GM12878 (cell line): ENCODE measurements at regions of chr10 and their contacts with region 1.

Region 1: DNA sequence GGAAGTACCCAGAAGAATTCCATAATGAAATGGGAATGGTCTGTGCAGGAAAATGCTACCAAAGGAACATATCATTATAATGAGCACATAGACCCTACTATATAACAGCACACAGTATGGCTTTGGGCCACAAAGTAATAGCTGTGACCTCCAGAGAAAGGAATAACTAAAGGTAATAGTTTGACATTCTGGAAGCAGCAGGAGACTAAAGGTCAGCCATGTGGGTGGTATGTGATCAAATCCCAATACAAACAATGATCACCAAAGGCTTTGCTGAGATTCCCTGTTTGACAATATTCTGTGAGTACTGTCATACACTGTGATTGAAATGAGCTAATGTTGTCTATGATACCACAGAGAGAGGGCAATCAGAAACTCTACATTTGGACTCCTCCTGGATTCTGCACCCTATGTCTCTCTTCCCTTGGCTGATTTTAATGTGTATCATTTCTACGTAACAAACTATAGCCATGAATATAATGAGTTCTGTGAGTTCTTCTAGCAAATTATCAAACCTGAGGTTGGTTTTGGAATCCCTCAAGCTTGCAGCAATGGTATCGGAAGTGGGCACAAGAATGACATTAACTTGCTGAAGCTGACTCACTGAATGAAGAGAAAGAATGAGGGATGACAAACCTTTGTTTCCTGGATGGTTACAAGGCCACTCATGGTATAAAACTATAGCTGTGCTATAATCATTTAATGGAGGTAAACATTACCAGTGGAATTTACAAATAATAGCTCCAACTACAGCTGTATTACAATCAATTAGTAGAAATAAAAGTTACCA is 99.6 kb downstream of the JMJD1C start:
- DNase-seq: no peak
- ATAC-seq: peak; percentile 64
- H3K4me3 ChIP-seq: no peak overlapping the region
- H3K27ac ChIP-seq: no peak overlapping the region
- H3K4me1 ChIP-seq: no peaks in the 10 kb centered on the region
- H3K27me3 ChIP-seq: no peaks in the 10 kb centered on the region
- CTCF ChIP-seq: no peak
- EP300 ChIP-seq: no peak
- POLR2A ChIP-seq: no peak
- RAD21 ChIP-seq: no peak

Region 2: GRCh38 chr10:63355682-63356081 is 10.5 kb before region 1 on chr10:
- CTCF ChIA-PET with region 1: interaction called, 3 read pairs
- POLR2A ChIA-PET with region 1: no interaction called
- RAD21 ChIA-PET with region 1: interaction called, 5 read pairs
- SMC1A ChIA-PET with region 1: interaction called, 16 read pairs
- in situ Hi-C with region 1: no loop called
- intact Hi-C with region 1: no loop called
- DNase-seq: no peak
- ATAC-seq: peak; percentile 64
- H3K4me3 ChIP-seq: no peak overlapping the region
- H3K27ac ChIP-seq: peak overlapping the region; percentile 51
- H3K4me1 ChIP-seq: peaks cover 13% of the 10 kb centered on the region
- H3K27me3 ChIP-seq: no peaks in the 10 kb centered on the region
- CTCF ChIP-seq: no peak
- EP300 ChIP-seq: no peak
- POLR2A ChIP-seq: no peak
- RAD21 ChIP-seq: no peak

Region 3: DNA sequence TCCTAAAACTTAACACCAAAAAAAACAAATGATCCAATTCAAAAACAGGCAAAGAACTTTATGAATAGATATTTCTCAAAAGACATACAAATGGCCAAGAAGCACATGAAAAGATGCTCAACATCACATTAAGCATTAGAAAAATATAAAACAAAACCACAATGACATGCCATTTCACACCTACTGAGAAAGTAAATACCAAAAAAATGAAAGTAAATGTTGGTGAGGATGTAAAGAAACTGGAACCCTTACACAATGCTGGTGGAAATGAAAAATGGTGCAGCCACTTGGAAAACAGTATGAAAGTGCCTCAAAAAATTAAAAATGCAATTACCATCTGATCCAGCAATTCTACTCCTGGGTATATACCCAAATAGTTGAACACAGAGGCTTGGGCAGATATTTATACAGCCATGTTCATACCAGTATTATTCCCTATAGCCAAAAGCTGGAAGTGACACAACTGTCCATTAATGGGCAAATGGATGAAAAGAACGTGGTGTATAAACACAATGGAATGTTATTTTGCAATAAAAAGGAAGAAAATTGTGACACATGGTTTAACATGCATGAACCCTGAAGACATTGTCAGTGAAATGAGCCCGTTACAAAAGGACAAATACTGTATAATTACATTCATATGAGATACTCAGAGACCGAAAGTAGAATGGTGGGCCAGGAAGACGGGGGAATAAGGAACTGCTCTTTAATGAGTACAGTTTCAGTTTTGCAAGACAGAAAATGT is 10.6 kb after region 1 on chr10:
- CTCF ChIA-PET with region 1: interaction called, 3 read pairs
- POLR2A ChIA-PET with region 1: no interaction called
- RAD21 ChIA-PET with region 1: interaction called, 3 read pairs
- SMC1A ChIA-PET with region 1: interaction called, 11 read pairs
- in situ Hi-C with region 1: no loop called
- intact Hi-C with region 1: no loop called
- DNase-seq: peak; percentile 64
- ATAC-seq: peak; percentile 98
- H3K4me3 ChIP-seq: peak overlapping the region; percentile 8
- H3K27ac ChIP-seq: peak overlapping the region; percentile 47
- H3K4me1 ChIP-seq: peaks cover 7% of the 10 kb centered on the region
- H3K27me3 ChIP-seq: no peaks in the 10 kb centered on the region
- CTCF ChIP-seq: no peak
- EP300 ChIP-seq: 0 out of 4 replicates have a peak, but pooled peaks of 1 of the 2 experiments have one; percentile 30
- POLR2A ChIP-seq: no peak
- RAD21 ChIP-seq: no peak

Region 4: DNA sequence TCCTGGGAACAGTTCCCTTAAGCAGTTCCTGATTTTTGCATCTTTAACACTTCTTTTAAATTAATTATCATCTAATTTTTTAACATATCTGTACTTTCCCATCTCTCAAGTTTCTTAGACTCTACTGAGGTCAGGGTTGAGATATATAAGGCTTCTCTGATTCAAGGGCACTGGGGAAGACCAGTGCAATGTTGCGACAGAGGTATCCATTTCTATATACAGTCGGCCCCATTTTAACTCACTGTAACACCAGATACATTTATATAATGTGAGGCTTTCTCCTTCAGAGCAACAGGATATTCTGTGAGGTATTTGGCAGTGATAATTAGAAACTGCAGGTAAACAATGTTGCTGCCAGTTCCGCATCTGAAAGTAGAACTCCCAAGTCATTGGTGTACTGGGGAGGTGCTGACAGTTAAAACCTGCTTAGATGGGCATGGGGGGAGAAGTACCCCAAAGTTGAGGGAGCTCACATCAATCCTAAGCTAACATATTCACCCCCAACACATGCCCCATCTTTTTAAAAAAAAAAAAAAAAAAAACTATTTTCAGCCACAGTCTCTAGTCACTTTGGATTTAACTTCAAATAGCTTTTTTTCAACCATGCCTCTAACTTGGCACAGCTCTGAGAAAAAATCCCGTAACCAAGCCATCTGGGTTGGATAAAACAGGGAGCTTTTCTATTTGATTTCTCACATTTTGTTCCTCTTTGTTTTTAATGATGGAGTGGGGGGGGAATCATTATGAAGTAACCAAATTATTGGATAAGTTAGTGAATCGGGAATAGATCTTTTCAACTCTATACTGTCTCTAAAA is 217.9 kb after region 1 on chr10:
- CTCF ChIA-PET with region 1: no interaction called
- POLR2A ChIA-PET with region 1: no interaction called
- RAD21 ChIA-PET with region 1: no interaction called
- SMC1A ChIA-PET with region 1: no interaction called
- in situ Hi-C with region 1: no loop called
- intact Hi-C with region 1: no loop called
- DNase-seq: no peak
- ATAC-seq: no peak
- H3K4me3 ChIP-seq: no peak overlapping the region
- H3K27ac ChIP-seq: no peak overlapping the region
- H3K4me1 ChIP-seq: no peaks in the 10 kb centered on the region
- H3K27me3 ChIP-seq: no peaks in the 10 kb centered on the region
- CTCF ChIP-seq: no peak
- EP300 ChIP-seq: no peak
- POLR2A ChIP-seq: no peak
- RAD21 ChIP-seq: no peak